ENCODE measurements at regions of chr16 and their contacts with region 1.

Region 1: GRCh38 chr16:11819798-11820197 is 22.7 kb upstream of the ZC3H7A start:
- DNase-seq: peak in 3 of 4 experiments; percentile 14 to 66 (median 33)
- ATAC-seq: peak; percentile 94
- H3K4me3 ChIP-seq: no peak overlapping the region
- H3K27ac ChIP-seq: 0 out of 3 replicates have a peak overlapping the region, but pooled peaks have one; percentile 29
- H3K4me1 ChIP-seq: peaks cover 0 to 12% of the 10 kb centered on the region in 2 experiments; a peak in 1 of 5 replicates
- H3K27me3 ChIP-seq: no peaks in the 10 kb centered on the region; a peak in 2 of 5 replicates
- CTCF ChIP-seq: no peak
- EP300 ChIP-seq: no peak
- POLR2A ChIP-seq: no peak
- RAD21 ChIP-seq: no peak

Region 2: DNA sequence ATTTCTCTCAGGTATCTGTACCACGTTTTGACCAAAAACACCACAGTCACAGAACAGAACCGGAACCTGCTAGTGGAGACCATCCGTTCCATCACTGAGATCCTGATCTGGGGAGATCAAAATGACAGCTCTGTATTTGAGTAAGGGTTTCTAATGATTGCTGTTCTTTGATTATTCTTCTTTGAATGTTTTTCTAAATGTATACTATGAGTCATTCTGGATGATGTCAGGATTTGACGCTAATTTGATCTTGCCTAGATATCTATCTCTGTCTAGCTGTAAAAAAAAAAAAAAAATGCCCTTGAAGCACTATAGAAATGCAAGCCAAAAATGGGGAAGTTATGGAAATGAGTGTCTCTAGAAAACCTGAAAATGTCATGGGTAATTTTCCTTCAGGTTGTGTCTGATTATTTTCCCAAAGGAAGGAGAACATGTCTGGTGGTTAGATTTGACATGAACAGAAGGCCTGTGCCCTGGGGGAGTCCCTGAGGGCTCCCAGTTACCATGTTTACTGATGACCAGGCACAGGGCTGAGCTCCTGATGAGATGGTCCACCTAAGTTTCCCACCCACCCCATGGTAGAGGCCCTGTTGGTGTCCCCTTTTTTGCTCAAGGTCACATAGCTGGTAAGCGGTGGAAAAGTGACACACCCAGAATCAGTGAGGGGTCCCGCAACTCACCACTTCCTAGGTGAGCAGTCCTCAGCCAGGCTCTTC is 861.9 kb before region 1 on chr16:
- CTCF ChIA-PET with region 1: no interaction called
- POLR2A ChIA-PET with region 1: no interaction called
- in situ Hi-C with region 1: loop called (anchors 10 kb)
- intact Hi-C with region 1: no loop called
- DNase-seq: no peak
- ATAC-seq: no peak
- H3K4me3 ChIP-seq: no peak overlapping the region
- H3K27ac ChIP-seq: no peak overlapping the region; the same call in 2 of the 3 replicates
- H3K4me1 ChIP-seq: peaks cover 0 to 6% of the 10 kb centered on the region in 2 experiments; a peak in 1 of 5 replicates
- H3K27me3 ChIP-seq: no peaks in the 10 kb centered on the region
- CTCF ChIP-seq: no peak
- EP300 ChIP-seq: no peak
- POLR2A ChIP-seq: no peak
- RAD21 ChIP-seq: no peak

Region 3: GRCh38 chr16:11667824-11668622 is 151.8 kb before region 1 on chr16 and contains the start of gene SNN:
- CTCF ChIA-PET with region 1: no interaction called
- POLR2A ChIA-PET with region 1: no interaction called
- in situ Hi-C with region 1: no loop called
- intact Hi-C with region 1: loop called (anchors 10 kb)
- DNase-seq: peak; percentile 92 to 99 (median 98)
- ATAC-seq: peak; percentile 99
- H3K4me3 ChIP-seq: peak within 1 kb of the TSS; percentile 41
- H3K27ac ChIP-seq: no peak within 1 kb of the TSS
- H3K4me1 ChIP-seq: peaks cover 4 to 51% of the 10 kb centered on the region in 2 experiments; a peak in 4 of 5 replicates
- H3K27me3 ChIP-seq: peaks cover 2 to 31% of the 10 kb centered on the region in 2 experiments; a peak in 3 of 5 replicates
- CTCF ChIP-seq: no peak
- EP300 ChIP-seq: no peak
- POLR2A ChIP-seq: no peak
- RAD21 ChIP-seq: no peak
- polyA plus RNA-seq, gene SNN: 0.07 to 0.22 TPM

Region 4: DNA sequence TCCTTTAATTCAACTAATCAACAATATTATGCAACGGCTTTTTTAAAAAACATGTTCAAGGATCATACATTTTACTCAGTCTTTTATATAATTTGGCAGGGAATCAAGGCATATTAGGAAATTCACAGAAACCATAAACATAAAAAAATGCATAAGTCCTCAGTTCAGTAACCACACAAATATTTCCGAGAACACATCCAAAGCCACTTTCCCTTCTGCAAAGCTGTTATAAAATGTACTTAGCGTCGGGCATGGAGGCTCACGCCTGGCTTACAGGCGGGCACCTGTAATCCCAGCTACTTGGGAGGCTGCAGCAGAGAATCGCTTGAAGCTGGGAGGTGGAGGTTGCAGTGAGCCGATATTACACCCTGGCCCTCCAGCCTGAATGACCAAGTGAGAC is 13.1 kb before region 1 on chr16:
- CTCF ChIA-PET with region 1: no interaction called
- POLR2A ChIA-PET with region 1: no interaction called
- in situ Hi-C with region 1: no loop called
- intact Hi-C with region 1: no loop called
- DNase-seq: no peak
- ATAC-seq: no peak
- H3K4me3 ChIP-seq: no peak overlapping the region
- H3K27ac ChIP-seq: no peak overlapping the region
- H3K4me1 ChIP-seq: peaks cover under 1 to 3% of the 10 kb centered on the region in 2 experiments; a peak in 3 of 5 replicates
- H3K27me3 ChIP-seq: no peaks in the 10 kb centered on the region; a peak in 1 of 5 replicates
- CTCF ChIP-seq: no peak
- EP300 ChIP-seq: no peak
- POLR2A ChIP-seq: no peak
- RAD21 ChIP-seq: no peak

Measured in K562 (cell line).